Dorsolateral prefrontal cortex (tissue), 120 donors: ENCODE measurements at regions of chr1 and their contacts with region 1.

Region 1: GRCh38 chr1:203996126-203996525 is 76.8 kb upstream of the SOX13 start:
- DNase-seq: peak in 8 of 10 donors; percentile 6 to 59 (median 50)
- H3K4me3 ChIP-seq: peak overlapping the region in 12 of 59 donors; percentile 4 to 42 (median 16)
- H3K27ac ChIP-seq: peak overlapping the region in 51 of 59 donors; percentile 2 to 83 (median 69)
- H3K27me3 ChIP-seq: no peaks in the 10 kb centered on the region
- CTCF ChIP-seq: no peak

Region 2: DNA sequence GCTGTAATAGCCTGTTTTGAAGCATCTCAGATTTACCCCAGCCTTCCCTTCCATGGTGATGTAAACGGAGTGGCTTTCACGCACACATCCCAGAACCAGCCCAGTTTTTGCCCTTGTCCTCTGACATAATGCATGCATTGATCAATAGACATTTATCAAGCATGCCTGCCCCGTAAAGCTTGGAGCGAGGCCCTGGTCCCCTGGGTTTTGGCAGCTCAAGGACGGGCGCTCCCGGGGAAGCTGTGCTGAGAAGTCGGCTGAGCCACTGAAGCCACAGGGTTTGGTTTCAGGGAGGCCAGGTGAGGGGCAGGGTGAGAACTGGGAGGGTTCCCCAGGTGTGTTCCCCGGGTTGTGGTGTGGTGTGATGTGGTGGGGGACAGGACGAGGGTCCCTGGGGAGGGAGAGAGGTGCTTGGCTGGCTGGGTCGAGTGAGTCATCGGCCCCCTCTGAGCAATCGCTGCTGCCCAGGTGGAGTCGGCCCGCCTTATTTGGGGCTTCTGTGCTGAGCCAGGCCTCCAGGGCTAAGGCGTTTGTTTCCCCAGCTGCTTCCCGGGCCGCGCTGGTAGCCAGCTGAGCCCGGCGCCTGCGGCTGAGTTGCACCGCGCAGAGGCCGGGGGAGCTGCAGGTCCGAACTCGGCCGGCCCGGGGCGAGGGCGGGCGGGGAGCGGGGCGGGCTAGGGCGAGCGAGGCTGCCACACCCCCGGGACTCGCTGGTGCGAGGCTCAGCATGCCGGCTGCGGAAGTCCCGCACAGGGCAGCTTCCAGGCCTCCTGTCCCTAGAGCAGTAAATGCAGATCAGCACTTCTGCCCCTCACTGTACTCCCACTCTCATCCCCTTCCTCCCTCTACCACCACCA is 345.9 kb before region 1 on chr1:
- intact Hi-C with region 1: no loop called
- DNase-seq: peak in 2 of 10 donors; percentile 29 to 56
- H3K4me3 ChIP-seq: peak overlapping the region in 54 of 59 donors; percentile 3 to 56 (median 37)
- H3K27ac ChIP-seq: peak overlapping the region in 46 of 59 donors; percentile 5 to 78 (median 51)
- H3K27me3 ChIP-seq: no peaks in the 10 kb centered on the region
- CTCF ChIP-seq: peak in 2 of 56 donors; percentile 14 to 22

Region 3: GRCh38 chr1:204041232-204041767 is 45.2 kb after region 1 on chr1:
- intact Hi-C with region 1: no loop called
- DNase-seq: peak in 4 of 10 donors; percentile 8 to 61 (median 31)
- H3K4me3 ChIP-seq: no peak overlapping the region
- H3K27ac ChIP-seq: peak overlapping the region in 18 of 59 donors; percentile 0 to 80 (median 32)
- H3K27me3 ChIP-seq: no peaks in the 10 kb centered on the region
- CTCF ChIP-seq: no peak

Region 4: DNA sequence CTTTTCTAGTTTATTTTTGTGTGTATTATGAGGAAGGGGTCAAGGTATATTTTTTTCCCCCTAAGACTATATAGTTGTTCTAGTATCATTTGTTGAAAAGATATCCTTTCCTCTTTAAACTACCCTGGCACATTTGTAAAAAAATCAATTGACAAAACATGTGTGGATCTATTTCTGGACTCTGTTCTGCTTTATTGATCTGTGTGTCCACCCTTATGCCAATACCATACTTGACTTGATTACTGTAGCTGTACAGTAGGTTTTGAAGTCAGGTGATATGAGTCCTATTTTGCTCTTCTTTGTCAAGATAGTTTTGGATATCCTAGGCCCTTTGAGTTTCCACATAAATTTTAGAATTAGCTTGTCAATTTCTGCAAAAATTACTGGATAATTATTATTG is 55.6 kb after region 1 on chr1:
- intact Hi-C with region 1: no loop called
- DNase-seq: no peak
- H3K4me3 ChIP-seq: no peak overlapping the region
- H3K27ac ChIP-seq: no peak overlapping the region
- H3K27me3 ChIP-seq: no peaks in the 10 kb centered on the region
- CTCF ChIP-seq: no peak

Region 5: DNA sequence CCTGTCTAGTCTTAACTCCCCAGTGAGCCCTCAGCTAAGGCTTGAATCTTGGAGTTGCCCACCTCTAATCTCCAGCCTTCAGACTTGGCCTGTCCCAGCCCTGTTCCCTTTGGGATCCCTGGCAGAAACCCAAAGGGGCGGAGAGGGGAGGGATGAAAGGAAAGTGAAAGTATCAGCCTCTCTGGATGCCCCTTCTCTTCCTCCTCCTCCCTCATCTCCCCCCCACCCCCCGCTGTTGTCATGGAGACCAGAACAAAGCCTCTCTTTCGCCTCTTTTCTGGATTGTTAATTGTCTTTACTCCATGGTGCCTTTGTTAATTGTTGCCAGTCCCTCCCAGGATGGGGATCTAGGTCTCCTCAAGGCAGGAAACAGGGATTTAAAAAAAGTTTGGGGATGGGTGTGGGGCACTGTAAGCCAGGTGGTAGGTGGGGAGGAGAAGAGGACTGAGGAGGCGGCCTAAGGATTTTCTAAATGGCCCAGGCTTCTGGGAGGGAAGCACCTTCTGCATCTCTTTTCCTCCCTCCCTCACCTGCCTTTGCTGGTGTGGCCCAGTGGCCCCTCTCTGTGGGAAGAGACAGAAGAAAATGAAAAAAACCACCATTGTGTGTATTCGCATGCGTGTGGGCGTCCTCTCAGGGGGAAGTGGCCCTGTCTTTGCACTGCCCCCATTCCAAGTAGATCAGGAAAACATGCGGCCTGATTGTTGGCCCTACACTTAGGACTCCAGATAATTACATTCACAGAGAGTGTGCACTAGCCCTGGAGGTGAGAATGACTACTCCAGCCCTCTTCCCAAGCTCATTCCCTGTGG is 69.3 kb after region 1 on chr1:
- intact Hi-C with region 1: loop called (anchors 1 to 2 kb)
- DNase-seq: peak in 5 of 10 donors; percentile 60 to 80 (median 68)
- H3K4me3 ChIP-seq: peak overlapping the region in 57 of 59 donors; percentile 10 to 69 (median 45)
- H3K27ac ChIP-seq: peak overlapping the region in 58 of 59 donors; percentile 46 to 98 (median 92)
- H3K27me3 ChIP-seq: no peaks in the 10 kb centered on the region
- CTCF ChIP-seq: peak in 1 of 56 donors; percentile 22

Region 6: DNA sequence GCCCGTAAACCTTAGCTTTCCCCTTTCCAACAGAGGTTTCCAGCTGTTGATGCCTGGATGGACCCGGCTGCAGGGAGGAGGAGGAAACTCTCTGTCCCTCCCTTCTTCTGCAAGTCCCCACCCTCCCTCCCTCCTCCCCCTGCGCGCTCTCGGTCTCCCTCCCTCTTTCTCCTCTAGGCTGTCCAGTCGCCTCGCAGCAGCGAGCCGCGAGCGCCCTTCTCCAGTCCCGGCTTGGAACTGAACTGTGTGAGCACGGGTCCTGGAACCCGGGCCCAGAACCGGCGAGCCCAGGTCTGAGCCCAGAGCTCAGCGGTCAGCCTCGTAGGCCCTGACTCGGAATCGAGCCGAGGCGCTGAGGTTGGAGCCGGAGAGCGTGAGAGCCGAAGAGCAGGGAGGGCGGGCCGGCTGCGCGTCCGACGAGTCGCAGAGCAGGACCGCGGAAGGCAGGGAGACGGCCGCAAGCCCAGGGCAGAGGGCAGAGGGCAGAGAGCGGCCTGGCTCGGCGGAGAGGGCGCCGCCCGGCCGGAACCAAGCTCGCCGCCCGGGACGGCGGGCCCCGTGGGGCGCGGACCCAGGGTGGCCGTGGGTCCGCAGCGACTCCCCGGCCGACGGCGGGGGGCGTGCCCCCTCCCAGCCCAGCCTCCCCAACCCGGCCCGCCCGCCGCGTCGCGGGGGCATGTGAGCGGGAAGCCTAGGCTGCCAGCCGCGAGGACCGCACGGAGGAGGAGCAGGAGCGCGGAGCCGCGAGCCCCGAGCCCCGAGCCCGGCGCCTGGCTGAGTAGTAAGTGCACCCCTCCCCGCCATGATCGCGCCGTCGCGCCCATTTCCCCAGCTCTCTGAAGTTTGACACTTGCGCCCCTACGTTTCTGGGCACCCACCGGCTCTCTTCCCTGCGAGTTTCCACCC is 77.1 kb after region 1 on chr1 and contains the start of gene SOX13:
- intact Hi-C with region 1: loop called in 1 of 2 experiments (anchors 2 kb)
- DNase-seq: peak; percentile 74 to 90 (median 86)
- H3K4me3 ChIP-seq: peak within 1 kb of the TSS; percentile 60 to 95 (median 76)
- H3K27ac ChIP-seq: peak within 1 kb of the TSS in 58 of 59 donors; percentile 34 to 92 (median 84)
- H3K27me3 ChIP-seq: no peaks in the 10 kb centered on the region
- CTCF ChIP-seq: peak in 38 of 56 donors; percentile 4 to 55 (median 32)
- total RNA-seq, gene SOX13: 13.7 to 62.1 (median 24.8) TPM

Region 7: GRCh38 chr1:204114606-204115005 is 118.5 kb after region 1 on chr1:
- intact Hi-C with region 1: no loop called
- DNase-seq: no peak
- H3K4me3 ChIP-seq: no peak overlapping the region
- H3K27ac ChIP-seq: peak overlapping the region in 1 of 59 donors; percentile 35
- H3K27me3 ChIP-seq: no peaks in the 10 kb centered on the region
- CTCF ChIP-seq: no peak

Region 8: GRCh38 chr1:204128964-204129896 is 133.1 kb after region 1 on chr1:
- intact Hi-C with region 1: loop called (anchors 2 to 5 kb)
- DNase-seq: peak in 9 of 10 donors; percentile 43 to 80 (median 58)
- H3K4me3 ChIP-seq: peak overlapping the region in 16 of 59 donors; percentile 8 to 35 (median 20)
- H3K27ac ChIP-seq: peak overlapping the region in 9 of 59 donors; percentile 0 to 65 (median 23)
- H3K27me3 ChIP-seq: no peaks in the 10 kb centered on the region
- CTCF ChIP-seq: peak; percentile 62 to 98 (median 93)